ENCODE measurements at regions of chr21 and their contacts with region 1.

Region 1: GRCh38 chr21:28516991-28517592 is 475.6 kb downstream of the LTN1 start:
- DNase-seq: peak in 2 of 4 experiments; percentile 11 to 14
- ATAC-seq: peak; percentile 56; the same call in 2 of the 3 replicates
- H3K4me3 ChIP-seq: no peak overlapping the region
- H3K27ac ChIP-seq: no peak overlapping the region
- H3K4me1 ChIP-seq: no peaks in the 10 kb centered on the region
- H3K27me3 ChIP-seq: no peaks in the 10 kb centered on the region
- CTCF ChIP-seq: peak in 2 of 3 experiments; percentile 22 to 34; a peak in 3 of 6 replicates
- EP300 ChIP-seq: no peak
- POLR2A ChIP-seq: no peak
- RAD21 ChIP-seq: peak; percentile 45 to 56

Region 2: DNA sequence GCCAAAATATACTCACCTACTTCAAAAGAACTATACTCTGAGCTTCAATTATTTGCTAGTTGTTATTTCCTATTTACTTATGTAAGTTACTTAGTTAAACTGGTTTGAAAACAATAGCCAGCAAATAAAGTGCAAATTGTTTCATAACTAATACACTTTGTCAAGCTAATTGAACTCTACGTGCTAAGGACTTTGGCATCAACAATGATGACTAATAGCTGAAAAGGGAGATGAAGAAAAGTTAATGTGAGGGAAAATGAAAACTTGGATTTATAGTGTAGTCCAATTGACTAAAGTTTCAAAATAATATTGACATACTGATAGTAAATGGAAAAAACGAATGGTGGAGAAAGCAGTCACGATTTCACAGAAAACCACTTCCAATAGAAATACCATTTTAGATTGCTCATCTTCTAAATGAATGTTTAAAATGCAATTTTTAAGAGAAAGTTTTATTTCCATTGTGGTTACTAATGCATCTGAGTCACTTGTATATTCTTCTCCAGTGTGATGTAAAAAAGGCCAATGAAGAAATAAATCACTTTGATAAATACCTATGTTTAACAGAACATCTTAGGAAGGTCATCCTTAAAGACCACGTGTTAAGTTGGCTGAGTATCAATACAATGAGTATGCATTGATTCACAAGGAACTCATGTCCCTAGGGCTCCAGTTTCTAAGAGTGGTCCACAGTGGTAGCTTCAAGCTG is 20.4 kb after region 1 on chr21:
- CTCF ChIA-PET with region 1: no interaction called
- POLR2A ChIA-PET with region 1: no interaction called
- in situ Hi-C with region 1: no loop called
- intact Hi-C with region 1: no loop called
- DNase-seq: no peak
- ATAC-seq: no peak
- H3K4me3 ChIP-seq: no peak overlapping the region
- H3K27ac ChIP-seq: no peak overlapping the region
- H3K4me1 ChIP-seq: no peaks in the 10 kb centered on the region
- H3K27me3 ChIP-seq: no peaks in the 10 kb centered on the region
- CTCF ChIP-seq: no peak
- EP300 ChIP-seq: no peak
- POLR2A ChIP-seq: no peak
- RAD21 ChIP-seq: no peak

Region 3: DNA sequence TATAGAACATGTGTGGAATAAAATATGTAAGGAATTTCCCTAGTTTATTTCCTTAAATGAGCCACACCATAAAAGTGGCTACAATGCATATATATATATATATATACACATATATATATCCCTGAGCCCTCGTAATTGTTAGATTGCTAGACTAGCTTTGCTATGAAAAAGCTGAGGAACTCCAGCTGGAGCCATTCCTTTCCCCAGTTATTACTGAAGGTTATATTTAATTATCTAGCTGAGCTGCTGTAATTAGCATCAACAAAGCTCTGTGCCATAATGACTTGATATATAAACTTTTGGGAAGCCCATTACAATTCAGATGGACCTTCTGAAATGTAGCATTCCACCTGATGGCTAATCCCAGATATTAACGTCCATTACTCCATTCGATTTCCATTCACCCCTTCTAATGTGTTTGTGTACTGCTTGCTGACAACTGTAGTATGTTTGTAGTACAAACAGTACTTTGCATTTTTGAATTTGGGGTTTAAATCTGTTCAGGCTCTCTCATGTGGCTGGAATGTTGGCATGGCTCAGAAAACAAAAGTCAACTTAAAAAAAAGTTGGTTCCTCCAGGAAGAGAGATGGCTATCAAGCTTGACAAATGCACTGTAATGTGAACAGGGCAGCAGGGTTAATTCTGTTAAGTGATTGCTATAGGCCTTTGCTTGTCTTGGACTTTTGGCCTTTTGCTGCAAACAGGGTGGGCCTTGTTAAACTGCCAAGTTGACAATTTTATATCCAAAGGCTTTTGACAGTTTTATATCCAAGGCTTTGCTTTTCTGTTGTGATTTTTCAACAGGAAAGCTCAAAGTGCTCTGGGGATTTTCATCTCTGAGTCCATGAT is 305.6 kb after region 1 on chr21:
- CTCF ChIA-PET with region 1: no interaction called
- POLR2A ChIA-PET with region 1: no interaction called
- in situ Hi-C with region 1: no loop called
- intact Hi-C with region 1: no loop called
- DNase-seq: no peak
- ATAC-seq: no peak
- H3K4me3 ChIP-seq: no peak overlapping the region
- H3K27ac ChIP-seq: no peak overlapping the region
- H3K4me1 ChIP-seq: no peaks in the 10 kb centered on the region
- H3K27me3 ChIP-seq: no peaks in the 10 kb centered on the region
- CTCF ChIP-seq: no peak
- EP300 ChIP-seq: no peak
- POLR2A ChIP-seq: no peak
- RAD21 ChIP-seq: no peak

Region 4: GRCh38 chr21:28943631-28944030 is 426.5 kb after region 1 on chr21:
- CTCF ChIA-PET with region 1: no interaction called
- POLR2A ChIA-PET with region 1: no interaction called
- in situ Hi-C with region 1: no loop called
- intact Hi-C with region 1: loop called (anchors 5 kb)
- DNase-seq: no peak
- ATAC-seq: no peak
- H3K4me3 ChIP-seq: no peak overlapping the region
- H3K27ac ChIP-seq: no peak overlapping the region
- H3K4me1 ChIP-seq: no peaks in the 10 kb centered on the region
- H3K27me3 ChIP-seq: no peaks in the 10 kb centered on the region
- CTCF ChIP-seq: no peak
- EP300 ChIP-seq: no peak
- POLR2A ChIP-seq: no peak
- RAD21 ChIP-seq: no peak